ENCODE measurements at regions of chr6 and their contacts with region 1.

Region 1: DNA sequence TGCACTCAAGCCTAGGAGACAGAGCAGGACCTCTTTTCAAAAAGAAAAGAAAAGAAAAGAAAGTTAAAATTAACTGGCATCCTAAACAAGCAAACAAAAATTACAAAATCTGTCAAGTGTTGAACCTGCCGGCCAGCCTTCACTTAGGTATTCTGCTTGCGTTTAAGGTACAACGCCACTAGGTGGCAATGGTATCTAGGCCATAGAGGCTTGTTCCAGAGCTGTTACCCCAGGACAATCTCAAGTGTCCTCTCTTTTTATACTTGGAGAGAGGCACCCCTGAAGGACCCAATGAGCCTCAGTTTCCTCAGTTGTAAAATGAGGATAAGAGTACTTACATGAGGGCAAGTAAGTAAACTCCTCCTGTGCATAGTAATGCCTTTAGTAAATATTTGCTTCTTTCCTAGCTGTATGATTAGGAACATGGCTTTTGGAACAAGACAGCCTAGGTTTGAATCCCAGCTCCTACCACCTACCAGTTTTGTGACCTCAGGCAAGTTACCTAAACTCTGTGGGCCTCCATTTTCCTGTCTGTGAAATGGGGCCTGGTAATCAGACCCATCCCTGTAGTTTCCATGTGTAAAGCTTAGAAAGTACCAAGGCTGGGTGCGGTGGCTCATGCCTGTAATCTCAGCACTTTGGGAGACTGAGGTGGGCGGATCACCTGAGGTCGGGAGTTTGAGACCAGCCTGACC is 5.8 kb upstream of the PACSIN1 start:
- DNase-seq: no peak
- ATAC-seq: peak; percentile 93
- H3K4me3 Mint-ChIP-seq: no peak overlapping the region
- H3K27ac Mint-ChIP-seq: no peak overlapping the region
- H3K4me1 Mint-ChIP-seq: peaks cover 1% of the 10 kb centered on the region
- H3K27me3 Mint-ChIP-seq: peaks cover 12% of the 10 kb centered on the region
- CTCF ChIP-seq: peak; percentile 19

Region 2: GRCh38 chr6:34324738-34325444 is 135.2 kb before region 1 on chr6:
- CTCF ChIA-PET with region 1: no interaction called
- POLR2A ChIA-PET with region 1: no interaction called
- intact Hi-C with region 1: no loop called
- DNase-seq: no peak
- ATAC-seq: no peak
- H3K4me3 Mint-ChIP-seq: no peak overlapping the region
- H3K27ac Mint-ChIP-seq: no peak overlapping the region
- H3K4me1 Mint-ChIP-seq: peaks cover 10% of the 10 kb centered on the region
- H3K27me3 Mint-ChIP-seq: no peaks in the 10 kb centered on the region
- CTCF ChIP-seq: no peak

Region 3: DNA sequence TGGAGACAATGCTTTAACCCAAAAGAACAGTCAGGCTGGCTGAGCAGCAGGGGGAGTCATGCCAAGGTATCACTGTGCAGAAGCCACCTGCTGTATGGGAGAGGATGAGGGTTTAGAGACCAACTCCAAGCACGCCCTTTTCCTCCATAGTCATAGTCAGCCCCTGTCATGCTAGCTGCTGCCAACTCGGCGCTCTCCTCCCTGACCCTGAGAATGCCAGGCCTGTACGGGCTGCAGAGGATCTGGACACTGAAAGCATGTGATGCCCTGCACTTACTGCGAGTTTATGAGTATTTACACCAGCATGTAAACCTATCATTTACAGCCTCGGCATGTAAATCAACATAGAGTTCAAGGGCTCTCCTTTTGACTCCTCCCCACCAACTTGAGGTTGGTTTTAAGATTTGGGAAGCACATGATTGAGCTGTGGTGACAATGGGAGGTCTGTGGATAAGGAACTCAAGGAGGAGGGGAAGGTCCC is 742.1 kb after region 1 on chr6:
- CTCF ChIA-PET with region 1: no interaction called
- POLR2A ChIA-PET with region 1: no interaction called
- intact Hi-C with region 1: loop called (anchors 2 kb)
- DNase-seq: no peak
- ATAC-seq: no peak
- H3K4me3 Mint-ChIP-seq: no peak overlapping the region
- H3K27ac Mint-ChIP-seq: no peak overlapping the region
- H3K4me1 Mint-ChIP-seq: no peaks in the 10 kb centered on the region
- H3K27me3 Mint-ChIP-seq: peaks cover 48% of the 10 kb centered on the region
- CTCF ChIP-seq: no peak

Region 4: DNA sequence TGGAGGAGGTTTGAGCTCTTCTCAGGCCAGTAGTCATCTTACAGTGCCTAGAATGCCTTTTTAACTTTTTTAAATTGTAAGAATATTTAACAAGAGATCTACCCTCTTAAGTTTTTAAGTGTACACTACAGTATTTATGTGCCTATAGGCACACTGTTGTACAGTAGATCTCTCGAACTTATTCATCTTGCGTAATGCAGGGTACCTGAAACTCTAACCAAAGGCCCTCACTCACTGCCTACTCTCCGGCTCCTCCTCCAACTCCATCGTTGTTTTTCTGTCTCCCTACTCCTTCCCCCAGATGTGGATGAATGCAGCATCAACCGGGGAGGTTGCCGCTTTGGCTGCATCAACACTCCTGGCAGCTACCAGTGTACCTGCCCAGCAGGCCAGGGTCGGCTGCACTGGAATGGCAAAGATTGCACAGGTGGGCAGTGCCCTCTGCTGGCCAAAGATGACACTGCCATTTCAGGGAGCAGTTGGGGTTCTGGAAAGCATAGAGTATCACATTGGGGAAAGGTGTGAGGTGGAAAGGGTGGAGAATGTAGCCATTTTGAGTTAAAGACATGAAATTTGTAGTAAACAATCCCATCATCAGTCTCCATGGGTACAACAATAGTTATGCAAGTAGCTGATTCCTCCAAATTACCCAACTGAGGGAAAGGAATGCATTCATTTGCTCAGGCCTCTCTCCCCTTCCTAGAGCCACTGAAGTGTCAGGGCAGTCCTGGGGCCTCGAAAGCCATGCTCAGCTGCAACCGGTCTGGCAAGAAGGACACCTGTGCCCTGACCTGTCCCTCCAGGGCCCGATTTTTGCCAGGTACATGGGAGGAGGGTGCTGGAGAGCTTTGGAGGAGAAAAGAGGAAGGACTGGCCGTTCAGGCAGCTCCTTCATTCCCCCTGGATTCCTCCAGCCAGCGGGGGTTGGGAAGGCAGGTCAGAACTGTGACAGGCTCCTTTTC is 781.1 kb after region 1 on chr6:
- CTCF ChIA-PET with region 1: interaction called, 12 read pairs
- POLR2A ChIA-PET with region 1: no interaction called
- intact Hi-C with region 1: loop called (anchors 5 kb)
- DNase-seq: peak; percentile 63
- ATAC-seq: peak; percentile 81
- H3K4me3 Mint-ChIP-seq: no peak overlapping the region
- H3K27ac Mint-ChIP-seq: no peak overlapping the region
- H3K4me1 Mint-ChIP-seq: no peaks in the 10 kb centered on the region
- H3K27me3 Mint-ChIP-seq: no peaks in the 10 kb centered on the region
- CTCF ChIP-seq: peak; percentile 100

Measured in activated B cell treated with CpG ODN at 0.5 μM for 24 hours (primary cell).